ENCODE measurements at regions of chr3 and their contacts with region 1.

Region 1: DNA sequence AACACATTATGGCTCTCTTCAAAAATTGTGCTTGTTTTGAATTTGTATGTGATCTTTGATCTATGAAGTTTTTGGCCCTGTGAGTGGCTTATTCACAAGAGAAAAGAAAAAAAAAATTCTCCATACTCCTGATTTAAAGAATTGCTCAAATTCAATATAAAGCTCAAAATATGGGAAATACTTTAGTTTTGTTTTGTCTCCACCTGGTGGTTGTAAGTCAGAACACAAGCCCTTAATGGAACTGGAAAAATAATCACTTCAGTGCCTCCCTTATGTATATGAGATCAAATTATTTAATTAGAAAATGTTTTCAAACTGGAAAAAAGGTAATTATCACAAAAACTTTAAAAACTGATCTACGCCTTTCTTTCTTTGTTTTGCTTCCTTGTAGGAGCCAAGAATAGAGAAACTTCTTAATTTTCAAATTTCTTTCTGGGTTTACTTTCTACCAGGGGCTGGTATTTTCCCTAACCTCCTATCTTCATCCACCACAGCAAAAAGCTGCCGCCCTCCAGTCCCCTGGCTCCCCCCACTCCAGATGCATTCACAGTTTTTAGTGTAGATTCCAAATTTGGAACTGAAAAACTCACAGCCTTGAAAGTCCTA is 50.6 kb downstream of the SERP1 start:
- DNase-seq: no peak
- H3K4me3 ChIP-seq: no peak overlapping the region
- H3K27ac ChIP-seq: no peak overlapping the region
- H3K4me1 ChIP-seq: no peaks in the 10 kb centered on the region
- H3K27me3 ChIP-seq: no peaks in the 10 kb centered on the region
- CTCF ChIP-seq: peak; percentile 79 to 93 (median 87)
- POLR2A ChIP-seq: no peak

Region 2: GRCh38 chr3:150227839-150228238 is 267.8 kb before region 1 on chr3:
- intact Hi-C with region 1: loop called (anchors 10 kb)
- DNase-seq: peak; percentile 73
- H3K4me3 ChIP-seq: no peak overlapping the region
- H3K27ac ChIP-seq: no peak overlapping the region
- H3K4me1 ChIP-seq: no peaks in the 10 kb centered on the region
- H3K27me3 ChIP-seq: no peaks in the 10 kb centered on the region
- CTCF ChIP-seq: peak in 2 of 3 experiments; percentile 27 to 41
- POLR2A ChIP-seq: no peak

Region 3: GRCh38 chr3:150286390-150287147 is 209.1 kb before region 1 on chr3:
- intact Hi-C with region 1: loop called (anchors 5 kb)
- DNase-seq: no peak
- H3K4me3 ChIP-seq: no peak overlapping the region
- H3K27ac ChIP-seq: no peak overlapping the region
- H3K4me1 ChIP-seq: no peaks in the 10 kb centered on the region
- H3K27me3 ChIP-seq: no peaks in the 10 kb centered on the region
- CTCF ChIP-seq: peak in 2 of 3 experiments; percentile 30 to 45
- POLR2A ChIP-seq: no peak